ENCODE measurements at regions of chr2 and their contacts with region 1.

Region 1: DNA sequence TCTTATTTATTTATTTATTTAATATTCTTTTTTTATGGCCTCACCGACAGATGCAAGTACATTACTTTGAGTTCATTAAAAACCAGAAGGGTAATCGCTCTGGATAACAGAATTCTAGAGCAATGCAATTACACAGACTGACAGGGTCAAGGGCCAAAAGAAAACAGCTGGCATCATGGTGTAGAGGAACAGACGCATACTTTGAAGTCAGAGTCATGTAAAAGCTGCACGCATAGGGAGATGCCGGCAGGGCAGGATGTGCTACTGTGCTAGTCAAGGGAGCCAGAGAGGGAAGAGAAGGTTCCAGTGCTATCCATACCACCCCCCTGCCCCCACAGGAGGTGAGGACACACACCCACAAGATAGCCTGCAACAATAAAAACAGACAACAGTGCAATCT is 115.2 kb upstream of the TFCP2L1 start:
- DNase-seq: no peak
- CTCF ChIP-seq: no peak

Region 2: GRCh38 chr2:120983344-120983743 is 416.9 kb before region 1 on chr2:
- CTCF ChIA-PET with region 1: no interaction called
- POLR2A ChIA-PET with region 1: no interaction called
- DNase-seq: no peak
- CTCF ChIP-seq: no peak

Region 3: DNA sequence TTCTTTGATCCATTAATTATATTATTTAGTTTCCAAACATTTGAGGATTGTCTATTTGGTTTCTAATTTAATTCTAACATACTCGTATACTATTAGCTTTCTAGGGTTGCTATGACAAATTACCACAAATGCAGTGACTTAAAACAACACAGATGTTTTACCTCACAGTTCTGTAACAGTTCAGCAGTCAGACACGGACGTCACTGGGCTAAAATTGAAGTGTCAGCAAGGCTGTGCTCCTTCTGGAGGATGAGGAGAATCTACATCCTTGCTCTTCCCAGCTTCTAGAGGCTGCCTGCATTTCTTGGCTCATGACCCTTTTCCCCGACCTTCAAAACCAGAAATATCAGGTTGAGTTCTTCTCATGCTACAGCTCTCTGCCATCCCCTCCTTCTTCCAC is 232.8 kb before region 1 on chr2:
- CTCF ChIA-PET with region 1: no interaction called
- POLR2A ChIA-PET with region 1: no interaction called
- DNase-seq: no peak
- CTCF ChIP-seq: no peak

Region 4: DNA sequence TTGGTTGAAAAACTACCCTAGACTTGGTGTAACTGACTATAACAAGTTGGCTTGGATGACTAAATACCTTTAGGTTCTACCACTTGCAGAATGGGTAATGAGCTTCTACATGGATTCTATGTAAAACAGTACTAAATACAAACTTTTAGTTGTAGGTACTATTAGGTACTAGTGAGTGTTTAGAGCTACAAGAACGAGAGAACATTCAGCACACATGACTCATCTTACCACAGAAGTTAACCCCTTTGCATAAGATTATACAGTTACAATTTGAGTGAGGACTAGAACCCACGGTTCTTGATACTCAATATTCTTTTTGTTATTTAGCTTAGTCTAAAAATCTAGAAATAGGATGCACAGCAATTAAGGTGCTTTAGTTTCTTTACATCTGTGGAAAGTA is 13.5 kb before region 1 on chr2:
- CTCF ChIA-PET with region 1: interaction called, 10 read pairs
- POLR2A ChIA-PET with region 1: no interaction called
- DNase-seq: no peak
- CTCF ChIP-seq: no peak

Region 5: DNA sequence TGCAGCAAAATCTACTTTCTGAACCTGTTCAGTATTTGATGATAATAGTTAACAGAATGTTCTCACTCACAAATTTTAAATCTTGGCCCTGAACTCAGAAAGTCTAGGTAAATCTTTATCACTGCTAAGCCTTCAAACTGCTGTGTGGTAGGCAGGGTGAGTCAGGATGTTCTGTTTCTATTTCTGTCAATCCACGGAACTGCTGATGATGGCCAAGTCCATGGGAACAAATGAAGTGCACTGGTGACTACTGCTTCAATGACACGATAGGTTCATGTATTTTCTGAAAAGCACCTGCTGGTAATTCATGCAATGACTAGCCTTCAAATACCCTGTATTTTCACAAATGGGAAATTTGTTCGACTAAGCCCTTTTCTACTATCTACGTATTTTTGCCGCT is 322.3 kb after region 1 on chr2:
- CTCF ChIA-PET with region 1: interaction called, 18 read pairs
- POLR2A ChIA-PET with region 1: no interaction called
- DNase-seq: no peak
- CTCF ChIP-seq: no peak